WTC11 (cell line): ENCODE measurements at regions of chr10 and their contacts with region 1.

Region 1: GRCh38 chr10:13039761-13040160 is 38.2 kb upstream of the CCDC3 start:
- DNase-seq: no peak
- ATAC-seq: no peak
- H3K4me3 Mint-ChIP-seq: no peak overlapping the region
- H3K27ac Mint-ChIP-seq: no peak overlapping the region
- H3K4me1 Mint-ChIP-seq: peaks cover 5% of the 10 kb centered on the region
- H3K27me3 Mint-ChIP-seq: no peaks in the 10 kb centered on the region; the same call in 1 of the 2 replicates
- CTCF ChIP-seq: no peak

Region 2: DNA sequence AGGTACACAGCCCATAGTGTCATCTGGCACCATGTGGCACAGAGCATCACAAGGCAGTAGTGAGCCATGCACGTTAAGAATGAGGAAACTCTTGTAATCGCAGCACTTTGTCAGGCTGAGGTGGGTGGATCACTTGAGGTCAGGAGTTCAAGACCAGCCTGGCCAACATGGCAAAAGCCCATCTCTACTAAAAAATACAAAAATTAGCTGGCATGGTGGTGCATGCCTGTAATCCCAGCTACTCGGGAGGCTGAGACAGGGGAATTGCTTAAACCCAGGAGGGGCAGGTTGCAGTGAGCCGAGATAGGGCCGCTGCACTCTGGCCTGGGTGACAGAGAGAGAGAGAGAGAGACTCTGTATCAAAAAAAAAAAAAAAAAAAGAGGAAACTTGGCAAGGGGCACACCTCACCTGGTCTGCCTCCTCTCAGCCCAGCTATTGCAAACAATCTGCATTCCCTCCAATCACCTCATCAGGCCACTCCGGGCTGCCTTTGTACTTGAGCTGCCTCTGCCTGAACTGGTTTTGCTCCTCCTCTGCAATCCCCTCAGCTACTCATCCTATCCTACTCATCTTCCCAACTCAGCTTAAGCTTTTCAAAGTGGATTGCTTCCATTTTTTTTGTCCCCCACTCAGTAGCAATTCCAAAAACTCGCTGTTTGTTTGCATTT is 14.2 kb after region 1 on chr10:
- CTCF ChIA-PET with region 1: interaction called, 4 read pairs
- POLR2A ChIA-PET with region 1: interaction called, 11 read pairs
- DNase-seq: peak; percentile 22
- ATAC-seq: peak; percentile 86
- H3K4me3 Mint-ChIP-seq: no peak overlapping the region
- H3K27ac Mint-ChIP-seq: no peak overlapping the region
- H3K4me1 Mint-ChIP-seq: peaks cover 35% of the 10 kb centered on the region
- H3K27me3 Mint-ChIP-seq: no peaks in the 10 kb centered on the region; the same call in 1 of the 2 replicates
- CTCF ChIP-seq: no peak

Region 3: DNA sequence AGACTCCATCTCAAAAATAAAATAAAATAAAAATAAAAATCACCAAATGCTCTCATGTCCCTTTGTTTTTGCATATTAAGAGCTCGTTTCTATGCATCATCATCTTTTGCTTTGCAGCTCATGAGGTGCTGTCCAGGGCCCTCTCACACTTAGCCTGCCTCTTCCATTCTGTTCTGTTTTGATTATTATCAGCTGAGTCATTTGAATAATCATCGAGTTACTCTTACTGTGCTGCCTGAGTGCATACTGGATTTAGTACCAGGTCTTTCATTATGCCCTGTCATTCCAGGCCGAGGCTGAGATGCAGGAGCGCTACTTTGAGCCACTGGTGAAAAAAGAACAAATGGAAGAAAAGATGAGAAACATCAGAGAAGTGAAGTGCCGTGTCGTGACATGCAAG is 161.4 kb after region 1 on chr10:
- CTCF ChIA-PET with region 1: no interaction called
- POLR2A ChIA-PET with region 1: no interaction called
- DNase-seq: no peak
- ATAC-seq: no peak
- H3K4me3 Mint-ChIP-seq: no peak overlapping the region
- H3K27ac Mint-ChIP-seq: no peak overlapping the region; the same call in 1 of the 2 replicates
- H3K4me1 Mint-ChIP-seq: no peaks in the 10 kb centered on the region
- H3K27me3 Mint-ChIP-seq: no peaks in the 10 kb centered on the region
- CTCF ChIP-seq: no peak